ENCODE measurements at regions of chr15 and their contacts with region 1.

Region 1: GRCh38 chr15:73908030-73908821 is 18.0 kb upstream of the LOXL1 start:
- DNase-seq: peak; percentile 83 to 86
- ATAC-seq: peak; percentile 91 to 97 (median 96)
- H3K4me3 ChIP-seq: no peak overlapping the region
- H3K27ac ChIP-seq: no peak overlapping the region
- H3K4me1 ChIP-seq: peaks cover 0 to 16% (median 5%) of the 10 kb centered on the region in 9 donors
- H3K27me3 ChIP-seq: no peaks in the 10 kb centered on the region
- CTCF ChIP-seq: peak; percentile 80 to 95 (median 94)

Region 2: DNA sequence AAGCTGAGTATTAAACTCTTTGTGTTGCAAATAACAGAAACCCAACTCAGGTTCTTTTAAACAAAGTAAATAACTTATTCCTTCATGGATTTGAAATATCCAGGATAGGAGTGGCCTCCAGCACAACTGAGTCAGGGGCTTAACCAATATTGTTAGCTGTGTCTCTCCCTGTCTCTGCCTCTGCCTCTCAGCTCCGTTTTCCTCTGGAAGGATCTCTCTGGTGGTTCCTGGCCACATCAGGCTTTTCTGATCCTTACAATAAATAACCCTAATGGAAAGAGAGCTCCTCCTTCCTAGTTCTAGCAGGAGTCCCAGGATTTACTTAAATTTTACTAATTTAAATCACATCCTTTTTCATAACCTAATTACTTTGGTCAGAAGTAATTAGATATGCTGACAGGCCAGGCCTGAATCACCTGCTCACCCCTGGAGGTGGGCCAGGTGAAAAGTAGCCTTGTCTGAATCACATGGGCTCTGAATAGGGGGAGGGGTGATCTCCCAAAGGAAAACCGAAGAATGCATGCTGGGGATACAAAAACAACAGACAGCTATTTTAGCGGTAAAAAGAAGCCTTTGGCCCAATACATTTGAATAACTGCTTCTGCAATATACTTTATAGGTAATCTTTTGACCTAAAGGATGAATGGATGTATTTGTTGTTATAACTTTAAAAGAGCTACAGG is 389.9 kb before region 1 on chr15:
- intact Hi-C with region 1: no loop called
- DNase-seq: peak in 1 of 2 donors; percentile 11
- ATAC-seq: peak in 5 of 8 donors; percentile 43 to 79 (median 51)
- H3K4me3 ChIP-seq: no peak overlapping the region
- H3K27ac ChIP-seq: peak overlapping the region in 9 of 10 donors; percentile 18 to 78 (median 71)
- H3K4me1 ChIP-seq: peaks cover 0 to 25% (median 9%) of the 10 kb centered on the region in 9 donors
- H3K27me3 ChIP-seq: no peaks in the 10 kb centered on the region
- CTCF ChIP-seq: no peak

Region 3: DNA sequence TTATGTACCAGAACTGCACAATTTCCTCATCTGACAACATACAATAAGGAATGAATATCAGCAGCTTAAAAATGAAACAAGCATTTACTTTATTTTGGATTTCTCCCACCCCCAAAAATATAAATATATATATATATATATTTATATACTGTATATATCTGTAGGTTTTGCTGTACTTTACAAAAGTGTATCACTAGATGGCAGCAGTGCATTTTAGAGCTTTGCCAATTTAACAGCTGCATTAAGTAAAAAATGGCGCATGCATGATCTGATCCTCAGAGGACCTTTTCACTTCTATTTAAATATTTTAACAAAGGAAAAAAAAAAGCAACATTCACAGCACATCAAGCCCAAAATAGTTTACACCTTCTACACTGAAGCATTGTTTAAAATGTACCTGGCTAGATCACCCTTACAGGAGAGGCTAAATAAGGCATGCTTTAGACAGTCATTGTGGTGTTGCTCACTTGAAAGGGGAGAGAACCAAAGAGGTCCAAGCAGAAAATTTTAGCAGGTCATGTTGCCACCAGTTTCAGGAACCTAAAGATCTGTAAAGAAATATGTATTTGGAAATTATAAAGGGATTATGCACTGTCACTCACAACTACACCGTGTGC is 347.6 kb before region 1 on chr15:
- intact Hi-C with region 1: loop called in 2 of 10 experiments (anchors 10 kb)
- DNase-seq: peak in 1 of 2 donors; percentile 36
- ATAC-seq: peak in 4 of 8 donors; percentile 46 to 54 (median 50)
- H3K4me3 ChIP-seq: no peak overlapping the region
- H3K27ac ChIP-seq: no peak overlapping the region
- H3K4me1 ChIP-seq: peaks cover 0 to 23% (median 11%) of the 10 kb centered on the region in 9 donors
- H3K27me3 ChIP-seq: no peaks in the 10 kb centered on the region
- CTCF ChIP-seq: peak; percentile 26 to 74 (median 55)

Region 4: DNA sequence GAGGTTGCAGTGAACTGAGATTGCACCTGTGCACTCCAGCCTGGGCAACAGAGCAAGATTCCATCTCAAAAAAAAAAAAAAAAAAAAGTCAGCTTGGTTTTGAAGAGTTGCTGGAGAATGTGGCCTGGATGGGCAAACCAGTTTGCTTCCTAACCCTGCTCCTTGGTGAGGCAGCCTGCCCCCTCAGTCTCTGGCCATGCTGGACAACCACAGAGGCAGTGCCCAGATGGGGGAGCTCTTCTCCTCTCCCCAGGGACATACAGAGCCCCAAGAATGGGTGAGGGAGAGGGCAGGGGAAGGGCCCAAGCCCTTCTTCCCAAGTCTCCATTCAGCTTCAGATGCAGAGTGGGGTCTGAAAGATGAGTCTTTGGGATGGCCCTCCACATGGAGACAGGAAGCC is 196.1 kb before region 1 on chr15:
- intact Hi-C with region 1: loop called in 8 of 10 experiments (anchors 5 to 10 kb)
- DNase-seq: no peak
- ATAC-seq: peak in 1 of 8 donors; percentile 21
- H3K4me3 ChIP-seq: no peak overlapping the region
- H3K27ac ChIP-seq: no peak overlapping the region
- H3K4me1 ChIP-seq: peaks cover 0 to 22% (median 8%) of the 10 kb centered on the region in 9 donors
- H3K27me3 ChIP-seq: no peaks in the 10 kb centered on the region
- CTCF ChIP-seq: peak in 5 of 9 donors; percentile 9 to 30 (median 20)

Region 5: DNA sequence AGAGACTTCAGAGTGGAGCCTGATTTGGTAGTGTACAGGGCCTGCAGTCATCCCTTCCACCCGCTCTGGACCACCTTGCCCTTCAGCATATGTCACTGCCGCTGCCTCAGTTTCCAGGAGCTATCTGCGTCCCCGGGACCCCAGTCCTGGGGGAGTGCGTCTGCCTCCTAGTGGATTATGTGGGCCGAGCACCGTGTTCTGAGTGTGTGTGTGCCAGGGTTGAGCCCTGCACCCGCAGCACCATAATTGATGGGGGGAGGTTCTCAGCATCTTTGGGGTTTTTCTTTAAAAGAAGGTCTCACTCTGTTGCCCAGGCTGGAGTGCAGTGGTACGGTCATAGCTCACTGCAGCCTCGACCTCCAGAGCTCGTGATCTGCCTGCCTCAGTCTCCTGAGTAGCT is 190.4 kb before region 1 on chr15:
- intact Hi-C with region 1: loop called in 7 of 10 experiments (anchors 5 to 10 kb)
- DNase-seq: no peak
- ATAC-seq: no peak
- H3K4me3 ChIP-seq: no peak overlapping the region
- H3K27ac ChIP-seq: no peak overlapping the region
- H3K4me1 ChIP-seq: peaks cover 0 to 24% (median 8%) of the 10 kb centered on the region in 9 donors
- H3K27me3 ChIP-seq: no peaks in the 10 kb centered on the region
- CTCF ChIP-seq: peak in 2 of 9 donors; percentile 14 to 18

Region 6: GRCh38 chr15:73727330-73727976 is 180.8 kb before region 1 on chr15:
- intact Hi-C with region 1: loop called in 1 of 10 experiments (anchors 10 kb)
- DNase-seq: no peak
- ATAC-seq: peak in 7 of 8 donors; percentile 28 to 93 (median 82)
- H3K4me3 ChIP-seq: no peak overlapping the region
- H3K27ac ChIP-seq: peak overlapping the region; percentile 45 to 76 (median 59)
- H3K4me1 ChIP-seq: peaks cover 0 to 18% (median 0%) of the 10 kb centered on the region in 9 donors
- H3K27me3 ChIP-seq: no peaks in the 10 kb centered on the region
- CTCF ChIP-seq: no peak

Region 7: DNA sequence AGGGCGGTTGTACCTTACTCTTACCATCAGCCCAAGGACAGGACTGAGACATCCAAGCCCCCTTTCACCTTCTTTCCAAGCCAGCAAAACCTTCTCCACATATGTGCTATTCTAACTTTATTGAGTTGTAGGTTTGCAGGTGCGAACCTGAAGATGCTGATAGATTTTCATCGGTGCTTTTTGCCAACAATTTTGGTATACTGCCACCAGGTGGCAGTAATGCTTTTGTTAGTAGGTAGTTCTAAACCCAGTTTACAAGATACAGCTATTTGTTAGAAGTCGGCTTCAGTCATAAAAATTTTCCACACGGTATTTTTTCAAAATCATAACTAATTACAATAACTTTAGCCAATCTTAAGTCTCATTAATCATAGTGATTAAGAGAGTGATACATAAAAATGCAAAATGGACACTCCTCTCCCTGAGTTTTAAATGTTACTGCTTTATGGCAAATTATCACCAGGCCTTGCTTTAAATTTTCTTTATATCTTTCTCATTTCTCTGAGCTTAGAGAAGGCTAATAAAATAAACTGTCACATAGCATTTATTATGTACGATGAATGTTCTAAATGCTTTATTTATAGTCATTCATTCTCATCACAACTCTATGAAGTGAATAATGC is 34.2 kb before region 1 on chr15:
- intact Hi-C with region 1: loop called in 6 of 10 experiments (anchors 1 to 5 kb)
- DNase-seq: no peak
- ATAC-seq: no peak
- H3K4me3 ChIP-seq: no peak overlapping the region
- H3K27ac ChIP-seq: no peak overlapping the region
- H3K4me1 ChIP-seq: peaks cover 5 to 23% (median 20%) of the 10 kb centered on the region in 9 donors
- H3K27me3 ChIP-seq: peaks cover 0 to 12% (median 0%) of the 10 kb centered on the region in 7 donors
- CTCF ChIP-seq: peak; percentile 50 to 76 (median 72)

Region 8: DNA sequence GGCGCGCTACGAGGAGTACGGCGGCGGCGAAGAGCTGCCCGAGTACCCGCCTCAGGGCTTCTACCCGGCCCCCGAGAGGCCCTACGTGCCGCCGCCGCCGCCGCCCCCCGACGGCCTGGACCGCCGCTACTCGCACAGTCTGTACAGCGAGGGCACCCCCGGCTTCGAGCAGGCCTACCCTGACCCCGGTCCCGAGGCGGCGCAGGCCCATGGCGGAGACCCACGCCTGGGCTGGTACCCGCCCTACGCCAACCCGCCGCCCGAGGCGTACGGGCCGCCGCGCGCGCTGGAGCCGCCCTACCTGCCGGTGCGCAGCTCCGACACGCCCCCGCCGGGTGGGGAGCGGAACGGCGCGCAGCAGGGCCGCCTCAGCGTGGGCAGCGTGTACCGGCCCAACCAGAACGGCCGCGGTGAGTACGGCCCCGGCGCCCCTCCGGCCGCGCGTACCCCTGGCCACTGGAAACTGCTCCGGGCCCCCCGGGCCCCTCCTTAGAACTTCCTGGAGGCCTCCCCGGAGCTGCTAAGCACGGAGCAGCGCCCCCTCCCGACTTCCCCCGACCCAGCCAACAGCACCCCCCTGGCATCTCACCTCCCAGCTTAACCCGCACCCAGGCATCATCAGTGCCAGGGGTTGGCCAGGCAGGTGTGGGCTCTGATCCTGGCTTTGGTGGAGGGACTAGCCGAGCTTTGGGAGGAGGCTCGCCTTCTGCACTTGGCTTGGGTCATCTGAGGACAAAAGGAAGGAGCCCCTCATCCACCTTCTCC is 19.4 kb after region 1 on chr15:
- intact Hi-C with region 1: no loop called
- DNase-seq: peak in 1 of 2 donors; percentile 67
- ATAC-seq: peak; percentile 17 to 51 (median 43)
- H3K4me3 ChIP-seq: peak overlapping the region; percentile 51 to 77 (median 66)
- H3K27ac ChIP-seq: peak overlapping the region; percentile 80 to 95 (median 92)
- H3K4me1 ChIP-seq: peaks cover 32 to 94% (median 67%) of the 10 kb centered on the region in 9 donors
- H3K27me3 ChIP-seq: peaks cover 0 to 33% (median 3%) of the 10 kb centered on the region in 7 donors
- CTCF ChIP-seq: peak; percentile 23 to 72 (median 55)

Region 9: DNA sequence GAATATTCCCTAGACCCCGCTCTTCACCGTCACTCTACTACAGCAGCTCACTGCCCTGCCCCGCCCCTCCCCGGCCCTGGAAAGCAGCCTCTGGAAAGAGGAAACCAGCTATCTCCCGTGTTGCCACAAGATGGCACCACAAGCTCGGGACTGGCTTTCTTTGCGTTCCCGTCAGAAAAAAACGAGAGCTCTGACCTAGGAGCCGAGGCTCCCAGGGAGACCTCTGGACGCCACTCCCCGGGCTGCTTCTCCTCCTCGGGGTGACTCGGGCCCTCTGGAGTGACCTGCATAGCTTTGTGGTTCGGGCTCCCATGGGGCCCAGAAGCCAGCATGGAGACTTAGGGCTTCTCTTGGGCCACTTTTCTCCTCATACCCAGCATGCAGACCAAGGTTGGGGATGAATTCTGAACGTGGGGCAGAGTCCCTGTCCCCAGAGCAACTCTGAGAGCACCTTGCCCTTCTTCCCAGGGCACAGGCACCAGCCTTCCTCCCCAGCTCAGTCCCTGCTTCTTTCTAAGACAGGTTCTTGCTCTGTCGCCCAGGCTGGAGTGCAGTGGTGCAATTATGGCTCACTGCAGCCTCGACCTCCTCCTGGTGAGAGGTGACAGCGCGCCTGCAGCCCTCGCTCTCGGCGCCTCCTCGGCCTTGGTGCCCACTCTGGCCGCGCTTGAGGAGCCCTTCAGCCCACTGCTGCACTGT is 64.9 kb after region 1 on chr15:
- intact Hi-C with region 1: no loop called
- DNase-seq: peak; percentile 81 to 88
- ATAC-seq: peak; percentile 87 to 96 (median 93)
- H3K4me3 ChIP-seq: peak overlapping the region in 8 of 10 donors; percentile 6 to 40 (median 32)
- H3K27ac ChIP-seq: peak overlapping the region in 1 of 10 donors; percentile 52
- H3K4me1 ChIP-seq: peaks cover 0 to 17% (median 10%) of the 10 kb centered on the region in 9 donors
- H3K27me3 ChIP-seq: no peaks in the 10 kb centered on the region
- CTCF ChIP-seq: peak; percentile 74 to 88 (median 85)

Measured in heart right ventricle (tissue), 16 donors.